Prostate gland (tissue), 2 donors: ENCODE measurements at regions of chr1 and their contacts with region 1.

Region 1: GRCh38 chr1:117758444-117759316 is 152.8 kb downstream of the TENT5C start:
- DNase-seq: peak; percentile 74
- H3K4me3 ChIP-seq: peak overlapping the region; percentile 16 to 19
- H3K27ac ChIP-seq: no peak overlapping the region
- H3K4me1 ChIP-seq: no peaks in the 10 kb centered on the region
- H3K27me3 ChIP-seq: no peaks in the 10 kb centered on the region
- CTCF ChIP-seq: peak; percentile 68 to 91 (median 76)
- POLR2A ChIP-seq: no peak

Region 2: GRCh38 chr1:117067533-117068370 is 690.9 kb before region 1 on chr1:
- intact Hi-C with region 1: loop called (anchors 5 kb)
- DNase-seq: peak; percentile 34
- H3K4me3 ChIP-seq: no peak overlapping the region
- H3K27ac ChIP-seq: no peak overlapping the region
- H3K4me1 ChIP-seq: no peaks in the 10 kb centered on the region
- H3K27me3 ChIP-seq: no peaks in the 10 kb centered on the region
- CTCF ChIP-seq: peak; percentile 68 to 86 (median 78)
- POLR2A ChIP-seq: no peak

Region 3: GRCh38 chr1:117512743-117513321 is 245.8 kb before region 1 on chr1:
- intact Hi-C with region 1: loop called (anchors 5 kb)
- DNase-seq: no peak
- H3K4me3 ChIP-seq: no peak overlapping the region
- H3K27ac ChIP-seq: no peak overlapping the region
- H3K4me1 ChIP-seq: no peaks in the 10 kb centered on the region
- H3K27me3 ChIP-seq: no peaks in the 10 kb centered on the region
- CTCF ChIP-seq: peak; percentile 13 to 70 (median 54)
- POLR2A ChIP-seq: no peak

Region 4: GRCh38 chr1:117534995-117535467 is 223.6 kb before region 1 on chr1:
- intact Hi-C with region 1: loop called (anchors 5 kb)
- DNase-seq: peak; percentile 58
- H3K4me3 ChIP-seq: no peak overlapping the region
- H3K27ac ChIP-seq: no peak overlapping the region
- H3K4me1 ChIP-seq: no peaks in the 10 kb centered on the region
- H3K27me3 ChIP-seq: no peaks in the 10 kb centered on the region
- CTCF ChIP-seq: peak; percentile 34 to 90 (median 70)
- POLR2A ChIP-seq: no peak

Region 5: GRCh38 chr1:117605774-117606648 is 152.7 kb before region 1 on chr1 and contains the start of gene TENT5C:
- intact Hi-C with region 1: loop called (anchors 5 kb)
- DNase-seq: peak; percentile 99
- H3K4me3 ChIP-seq: peak within 1 kb of the TSS; percentile 75 to 81
- H3K27ac ChIP-seq: peak within 1 kb of the TSS; percentile 92 to 93
- H3K4me1 ChIP-seq: peaks cover 9% of the 10 kb centered on the region
- H3K27me3 ChIP-seq: no peaks in the 10 kb centered on the region
- CTCF ChIP-seq: peak in 2 of 4 experiments; percentile 7 to 10
- POLR2A ChIP-seq: peak; percentile 86
- total RNA-seq, gene TENT5C: 23.1 to 28.7 TPM

Region 6: GRCh38 chr1:117871013-117871412 is 112.3 kb after region 1 on chr1:
- intact Hi-C with region 1: no loop called
- DNase-seq: no peak
- H3K4me3 ChIP-seq: no peak overlapping the region
- H3K27ac ChIP-seq: no peak overlapping the region
- H3K4me1 ChIP-seq: no peaks in the 10 kb centered on the region
- H3K27me3 ChIP-seq: no peaks in the 10 kb centered on the region
- CTCF ChIP-seq: no peak
- POLR2A ChIP-seq: no peak

Region 7: GRCh38 chr1:117895482-117896114 is 136.9 kb after region 1 on chr1:
- intact Hi-C with region 1: loop called (anchors 5 kb)
- DNase-seq: peak; percentile 61
- H3K4me3 ChIP-seq: no peak overlapping the region
- H3K27ac ChIP-seq: no peak overlapping the region
- H3K4me1 ChIP-seq: no peaks in the 10 kb centered on the region
- H3K27me3 ChIP-seq: no peaks in the 10 kb centered on the region
- CTCF ChIP-seq: peak; percentile 31 to 67 (median 58)
- POLR2A ChIP-seq: no peak